Common myeloid progenitor, CD34-positive (primary cell): ENCODE measurements at regions of chr11 and their contacts with region 1.

Region 1: GRCh38 chr11:396948-397548 is 3.0 kb downstream of the PKP3 start:
- DNase-seq: peak; percentile 59 to 78 (median 65)
- H3K4me3 ChIP-seq: peak overlapping the region; percentile 24 to 72 (median 51)
- H3K27ac ChIP-seq: no peak overlapping the region
- H3K4me1 ChIP-seq: peaks cover 0 to 17% (median 13%) of the 10 kb centered on the region in 4 experiments
- H3K27me3 ChIP-seq: peaks cover 0 to 10% (median 0%) of the 10 kb centered on the region in 5 experiments

Region 2: GRCh38 chr11:363948-364761 is 32.9 kb before region 1 on chr11:
- CTCF ChIA-PET with region 1: interaction called, 12 read pairs
- POLR2A ChIA-PET with region 1: no interaction called
- DNase-seq: peak; percentile 43 to 66 (median 61)
- H3K4me3 ChIP-seq: no peak overlapping the region
- H3K27ac ChIP-seq: no peak overlapping the region
- H3K4me1 ChIP-seq: peaks cover 0 to 9% (median 6%) of the 10 kb centered on the region in 4 experiments
- H3K27me3 ChIP-seq: peaks cover 0 to 38% (median 20%) of the 10 kb centered on the region in 5 experiments

Region 3: DNA sequence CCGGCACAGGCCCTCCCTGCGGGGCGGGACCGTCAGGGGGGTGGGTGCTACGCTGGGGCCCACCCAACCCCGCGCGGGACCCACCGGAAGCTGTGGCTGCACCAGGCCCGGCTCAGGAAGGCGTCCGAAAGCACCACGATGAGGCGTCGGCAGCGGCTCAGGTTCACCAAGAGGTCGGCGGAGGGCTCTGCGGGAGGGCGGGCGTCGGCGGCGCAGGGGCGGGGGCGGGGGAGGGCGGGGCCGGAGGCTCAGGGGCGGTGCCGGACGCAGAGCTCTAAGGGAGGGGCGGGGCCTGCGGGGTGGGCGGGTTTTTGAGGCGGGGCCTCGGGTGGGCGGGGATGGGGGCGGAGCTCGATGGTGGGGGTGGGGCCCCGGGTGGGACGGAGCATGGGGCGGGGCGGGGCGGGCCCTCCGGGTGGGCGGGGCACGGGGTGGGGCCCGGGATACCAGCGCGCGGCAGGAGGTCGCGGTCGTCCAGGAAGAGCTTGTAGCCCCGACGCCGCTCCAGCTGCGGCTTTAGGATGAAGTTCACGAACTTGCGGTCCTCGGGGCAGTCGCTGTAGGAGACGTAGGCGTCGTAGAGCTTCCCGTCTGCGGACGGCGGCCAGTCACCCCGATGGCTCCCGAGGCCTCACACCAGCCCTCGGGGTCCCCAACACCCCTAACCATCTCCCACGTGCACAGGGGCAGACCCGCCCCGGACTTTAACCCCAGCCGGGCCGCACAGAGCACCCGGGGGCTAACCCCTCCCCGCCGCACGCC is 10.1 kb after region 1 on chr11:
- CTCF ChIA-PET with region 1: interaction called, 15 read pairs
- POLR2A ChIA-PET with region 1: interaction called, 3 read pairs
- DNase-seq: peak; percentile 93 to 98 (median 98)
- H3K4me3 ChIP-seq: peak overlapping the region in 5 of 7 experiments; percentile 19 to 59 (median 46)
- H3K27ac ChIP-seq: no peak overlapping the region
- H3K4me1 ChIP-seq: peaks cover 0 to 20% (median 14%) of the 10 kb centered on the region in 4 experiments
- H3K27me3 ChIP-seq: peaks cover 0 to 11% (median 0%) of the 10 kb centered on the region in 5 experiments